K562 (cell line): ENCODE measurements at regions of chr13 and their contacts with region 1.

Region 1: DNA sequence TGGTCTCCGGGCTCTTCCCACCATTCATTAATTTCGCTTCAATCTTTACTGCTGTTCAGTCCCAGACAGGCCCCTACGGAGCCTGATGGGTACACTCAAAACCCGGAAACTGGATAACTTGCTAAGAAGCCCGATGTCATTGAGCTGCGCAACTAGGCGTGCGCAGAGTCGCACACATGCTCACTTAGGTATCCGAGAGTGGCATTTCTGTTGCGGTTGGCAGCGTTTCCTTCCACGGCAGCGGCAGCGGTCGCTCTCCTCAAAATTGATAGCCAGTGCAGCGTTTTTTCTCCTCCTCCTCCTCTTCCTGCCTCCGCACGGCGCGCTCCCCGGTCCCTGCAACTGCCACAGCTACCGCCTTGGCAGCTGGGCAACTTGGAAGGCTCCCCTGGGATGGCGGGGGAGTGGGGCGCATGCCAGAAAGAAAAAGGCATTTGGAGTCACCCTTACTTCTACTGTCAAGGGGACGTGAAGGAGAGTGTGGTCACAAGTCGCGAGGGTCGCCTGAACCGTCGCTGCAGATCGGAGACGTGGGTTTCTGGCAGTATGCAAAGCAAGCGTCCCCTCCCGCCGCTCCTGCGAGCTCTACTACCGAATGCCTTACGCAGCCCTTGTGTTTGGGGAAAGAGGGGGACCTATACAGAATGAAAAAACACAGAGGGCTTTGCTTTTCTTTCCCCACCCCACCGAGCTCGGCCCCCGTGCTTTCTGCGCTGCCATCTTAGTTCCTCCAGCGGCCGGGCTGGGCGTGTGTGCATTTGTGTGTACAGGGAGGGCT is 2.4 kb upstream of the MYCBP2 start:
- DNase-seq: peak; percentile 53 to 89 (median 62)
- ATAC-seq: peak; percentile 79
- H3K4me3 ChIP-seq: peak overlapping the region; percentile 84
- H3K27ac ChIP-seq: peak overlapping the region; percentile 78
- H3K4me1 ChIP-seq: peaks cover 6 to 9% of the 10 kb centered on the region in 2 experiments; a peak in 3 of 5 replicates
- H3K27me3 ChIP-seq: no peaks in the 10 kb centered on the region; a peak in 1 of 5 replicates
- CTCF ChIP-seq: no peak
- EP300 ChIP-seq: no peak; the same call in 1 of the 2 replicates
- POLR2A ChIP-seq: peak; percentile 77
- RAD21 ChIP-seq: no peak

Region 2: DNA sequence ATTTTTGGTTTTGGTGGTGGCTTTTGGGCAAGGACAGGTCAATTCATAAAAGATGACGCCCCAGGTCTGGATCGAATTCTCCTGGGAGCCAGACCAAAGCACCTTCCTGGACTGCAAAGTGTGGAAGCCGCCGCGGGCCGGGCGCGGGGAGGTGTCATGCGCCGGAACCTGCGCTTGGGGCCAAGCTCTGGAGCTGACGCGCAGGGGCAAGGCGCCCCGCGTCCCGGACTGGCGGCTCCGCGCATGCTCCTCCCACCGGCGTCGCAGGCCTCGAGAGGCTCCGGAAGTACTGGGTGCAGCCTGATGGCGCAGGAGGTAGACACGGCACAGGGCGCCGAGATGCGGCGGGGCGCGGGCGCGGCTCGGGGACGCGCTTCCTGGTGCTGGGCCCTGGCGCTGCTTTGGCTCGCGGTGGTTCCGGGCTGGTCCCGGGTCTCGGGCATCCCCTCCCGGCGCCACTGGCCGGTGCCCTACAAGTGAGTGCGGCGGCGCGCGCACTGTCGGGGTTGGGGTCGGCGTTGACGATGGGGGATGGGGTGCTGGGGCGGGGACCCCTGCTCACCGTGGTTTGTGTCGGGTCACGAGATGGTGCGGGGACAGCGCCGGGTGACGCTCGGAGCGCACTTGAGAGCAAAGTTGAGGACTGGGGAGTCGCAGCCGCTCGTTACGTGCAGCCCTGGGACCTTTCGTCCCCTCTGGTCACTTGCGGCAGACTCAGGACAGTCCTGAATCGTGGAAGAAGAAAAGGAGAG is 337.4 kb before region 1 on chr13 and contains the start of gene CLN5:
- CTCF ChIA-PET with region 1: no interaction called
- POLR2A ChIA-PET with region 1: no interaction called
- in situ Hi-C with region 1: no loop called
- intact Hi-C with region 1: loop called (anchors 5 kb)
- DNase-seq: peak; percentile 85 to 94 (median 88)
- ATAC-seq: peak; percentile 97
- H3K4me3 ChIP-seq: peak within 1 kb of the TSS; percentile 82
- H3K27ac ChIP-seq: peak within 1 kb of the TSS; percentile 85
- H3K4me1 ChIP-seq: peaks cover 7 to 8% of the 10 kb centered on the region in 2 experiments; a peak in 4 of 5 replicates
- H3K27me3 ChIP-seq: no peaks in the 10 kb centered on the region
- CTCF ChIP-seq: no peak
- EP300 ChIP-seq: no peak
- POLR2A ChIP-seq: peak; percentile 85
- RAD21 ChIP-seq: no peak
- polyA plus RNA-seq, gene CLN5: 4.6 to 5.3 TPM

Region 3: DNA sequence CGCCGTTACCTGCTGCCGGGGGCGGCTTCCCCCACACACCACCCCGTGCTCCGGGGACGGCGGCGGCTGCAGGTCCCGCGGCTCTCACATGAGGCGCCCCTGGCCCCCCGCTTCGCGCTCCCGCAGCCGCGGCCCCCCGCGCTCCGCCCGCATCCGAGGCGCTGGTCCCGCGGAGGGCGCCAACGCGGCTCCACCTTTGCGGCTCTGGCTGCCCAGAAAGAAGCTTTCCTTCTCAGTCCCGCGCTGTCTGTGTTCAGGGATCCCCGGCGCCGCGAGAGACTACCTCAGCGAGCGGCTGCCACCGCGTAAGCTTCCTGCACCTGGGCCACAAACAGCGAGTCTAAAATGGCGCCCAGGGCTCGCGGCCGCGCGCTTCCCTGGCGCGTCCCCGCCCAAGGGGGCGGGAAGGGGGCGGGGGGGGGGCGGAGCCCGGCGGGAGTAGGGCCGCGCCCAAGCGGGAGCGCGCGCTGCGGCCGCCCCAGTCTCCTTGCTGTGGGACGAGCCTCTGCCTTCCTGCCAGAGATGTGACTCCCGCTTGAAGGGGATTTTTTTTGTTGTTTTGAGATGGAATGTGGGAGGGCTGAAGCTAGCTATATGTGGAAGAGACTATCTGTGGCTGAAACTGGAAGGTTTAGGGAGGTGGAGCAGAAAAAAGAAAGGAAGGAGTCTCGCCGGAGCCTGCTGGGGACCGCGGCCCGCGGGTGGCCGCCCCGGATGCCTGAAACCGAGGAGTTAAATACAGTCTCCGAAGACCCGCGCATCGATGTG is 302.3 kb before region 1 on chr13 and contains the start of gene FBXL3:
- CTCF ChIA-PET with region 1: no interaction called
- POLR2A ChIA-PET with region 1: no interaction called
- in situ Hi-C with region 1: no loop called
- intact Hi-C with region 1: loop called (anchors 5 kb)
- DNase-seq: peak; percentile 80 to 86 (median 84)
- ATAC-seq: peak; percentile 77
- H3K4me3 ChIP-seq: peak within 1 kb of the TSS; percentile 93
- H3K27ac ChIP-seq: peak within 1 kb of the TSS; percentile 96
- H3K4me1 ChIP-seq: peaks cover 6 to 8% of the 10 kb centered on the region in 2 experiments; a peak in 4 of 5 replicates
- H3K27me3 ChIP-seq: no peaks in the 10 kb centered on the region
- CTCF ChIP-seq: no peak
- EP300 ChIP-seq: no peak
- POLR2A ChIP-seq: peak; percentile 87
- RAD21 ChIP-seq: no peak
- polyA plus RNA-seq, gene FBXL3: 3.8 to 4.0 TPM

Region 4: DNA sequence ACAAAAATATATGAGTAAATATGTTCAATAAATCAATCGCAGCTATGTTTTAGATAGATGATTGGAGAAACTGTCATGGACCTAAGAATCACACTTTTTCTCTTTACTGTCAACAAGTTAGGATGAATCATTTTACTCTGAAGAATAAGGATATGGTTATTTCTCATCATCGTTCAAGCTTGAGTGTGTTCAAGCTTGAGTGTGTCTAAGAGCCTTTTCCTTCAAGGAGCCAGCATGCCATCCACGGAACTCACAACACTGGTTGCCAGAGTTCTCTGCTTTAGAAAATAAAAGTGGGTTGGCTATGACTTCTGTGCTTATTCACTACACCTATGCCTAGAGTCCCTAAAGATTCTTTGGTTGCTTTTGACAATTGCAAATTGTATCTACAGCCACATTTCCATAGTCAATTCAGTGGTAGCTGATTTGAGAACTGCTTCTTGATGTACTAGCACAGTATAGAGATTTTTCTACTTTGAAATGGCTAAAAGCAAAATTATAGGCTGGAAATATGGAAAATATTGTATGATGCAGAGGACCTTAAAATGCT is 148.1 kb after region 1 on chr13:
- CTCF ChIA-PET with region 1: no interaction called
- POLR2A ChIA-PET with region 1: interaction called, 3 read pairs
- in situ Hi-C with region 1: no loop called
- intact Hi-C with region 1: loop called (anchors 2 kb)
- DNase-seq: no peak
- ATAC-seq: no peak
- H3K4me3 ChIP-seq: no peak overlapping the region
- H3K27ac ChIP-seq: peak overlapping the region; percentile 77; the same call in 1 of the 3 replicates
- H3K4me1 ChIP-seq: peaks cover 0 to 5% of the 10 kb centered on the region in 2 experiments; a peak in 2 of 5 replicates
- H3K27me3 ChIP-seq: no peaks in the 10 kb centered on the region
- CTCF ChIP-seq: no peak
- EP300 ChIP-seq: no peak
- POLR2A ChIP-seq: no peak
- RAD21 ChIP-seq: no peak

Region 5: DNA sequence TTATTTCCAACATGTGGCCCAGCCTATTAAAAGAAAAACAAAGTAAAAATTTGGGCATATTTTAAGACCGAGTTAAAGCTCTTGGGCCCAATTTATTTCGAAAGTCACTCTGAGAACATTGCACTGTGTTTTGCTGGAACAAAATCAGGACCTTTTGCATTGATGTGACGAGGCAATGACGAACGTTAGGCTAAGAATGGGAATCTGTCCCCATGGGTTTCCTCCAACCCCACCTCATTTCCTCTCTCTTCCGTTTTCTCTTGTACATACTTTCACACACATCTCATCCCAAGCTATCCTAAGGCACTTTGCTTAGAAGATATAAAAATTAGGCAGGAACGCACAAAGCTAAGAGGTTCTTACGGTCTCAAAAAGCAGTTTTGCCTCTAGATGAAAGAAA is 567.2 kb after region 1 on chr13:
- CTCF ChIA-PET with region 1: no interaction called
- POLR2A ChIA-PET with region 1: no interaction called
- in situ Hi-C with region 1: no loop called
- intact Hi-C with region 1: no loop called
- DNase-seq: no peak
- ATAC-seq: no peak
- H3K4me3 ChIP-seq: no peak overlapping the region
- H3K27ac ChIP-seq: no peak overlapping the region
- H3K4me1 ChIP-seq: no peaks in the 10 kb centered on the region
- H3K27me3 ChIP-seq: no peaks in the 10 kb centered on the region
- CTCF ChIP-seq: no peak
- EP300 ChIP-seq: no peak
- POLR2A ChIP-seq: no peak
- RAD21 ChIP-seq: no peak